Left ventricle myocardium superior (tissue), 1 donor: ENCODE measurements at regions of chr4 and their contacts with region 1.

Region 1: GRCh38 chr4:185039508-185040273 is 21.4 kb downstream of the HELT start:
- DNase-seq: no peak
- ATAC-seq: peak; percentile 80

Region 2: GRCh38 chr4:184201179-184201578 is 838.5 kb before region 1 on chr4:
- intact Hi-C with region 1: no loop called
- DNase-seq: no peak
- ATAC-seq: no peak

Region 3: DNA sequence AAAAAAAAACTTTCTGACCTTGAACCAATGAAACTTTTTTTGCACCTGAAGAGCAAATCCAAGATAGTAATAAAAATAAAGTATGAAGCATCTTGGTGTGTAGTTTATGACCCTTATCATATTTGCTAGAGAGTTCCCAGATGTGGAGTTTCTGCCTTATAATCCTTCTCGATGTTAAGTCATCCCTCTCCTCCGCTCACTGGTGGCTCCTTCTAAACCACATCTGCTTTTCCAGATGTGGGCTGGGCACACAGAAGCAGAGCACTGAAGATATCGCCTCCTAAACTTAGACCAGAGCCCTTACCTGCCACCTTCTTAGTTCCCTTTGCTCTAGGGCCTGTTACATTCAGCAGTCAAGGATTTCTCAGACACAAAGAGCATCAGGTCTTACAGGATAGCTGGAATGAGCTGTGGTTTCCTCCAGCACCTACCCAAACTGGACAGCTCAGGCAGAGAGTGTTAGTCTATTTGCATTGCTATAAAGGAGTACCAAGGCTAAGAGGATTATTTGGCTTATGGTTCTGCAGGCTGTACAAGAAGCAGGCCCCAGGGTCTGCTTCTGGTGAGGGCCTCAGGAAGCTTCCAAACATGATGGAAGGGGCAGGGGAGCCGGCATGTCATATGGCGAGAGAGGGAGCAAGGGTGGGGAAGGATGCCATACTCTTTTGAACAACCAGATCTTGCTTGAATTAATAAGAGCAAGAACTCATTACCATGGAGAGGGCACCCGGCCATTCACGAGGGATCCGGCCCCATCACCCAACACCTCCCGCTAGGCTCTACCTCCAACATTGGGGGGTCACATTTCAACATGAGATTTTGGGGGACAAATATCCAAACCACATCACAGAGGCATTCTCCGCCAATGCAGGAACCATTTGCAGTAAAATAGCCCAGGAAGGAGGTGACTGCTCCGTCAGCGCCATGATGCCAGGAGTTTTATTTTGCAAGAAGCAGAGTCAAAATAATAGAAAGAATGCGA is 97.0 kb before region 1 on chr4:
- intact Hi-C with region 1: no loop called
- DNase-seq: no peak
- ATAC-seq: no peak

Region 4: DNA sequence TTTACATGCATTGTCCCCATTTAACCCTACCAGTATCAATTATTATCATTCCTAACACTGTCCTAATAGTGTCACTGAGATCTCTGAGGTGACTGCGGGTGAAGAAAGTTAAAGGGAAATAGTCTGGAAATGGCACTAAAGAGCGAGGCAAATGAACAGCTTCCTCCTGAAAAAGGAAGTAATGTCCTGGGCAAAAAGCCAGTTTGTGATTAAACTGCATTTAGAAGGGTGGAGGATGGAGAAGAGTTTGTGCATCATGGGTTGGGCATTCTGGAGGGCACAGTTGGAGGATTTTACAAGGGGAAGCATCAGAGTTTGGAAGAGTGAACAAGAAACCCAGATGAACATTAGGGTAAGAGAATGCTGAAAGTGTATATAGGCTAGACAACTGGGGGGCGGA is 42.9 kb after region 1 on chr4:
- intact Hi-C with region 1: no loop called
- DNase-seq: no peak
- ATAC-seq: no peak

Region 5: GRCh38 chr4:185096032-185096653 is 56.5 kb after region 1 on chr4:
- intact Hi-C with region 1: loop called (anchors 5 kb)
- DNase-seq: no peak
- ATAC-seq: peak; percentile 29

Region 6: DNA sequence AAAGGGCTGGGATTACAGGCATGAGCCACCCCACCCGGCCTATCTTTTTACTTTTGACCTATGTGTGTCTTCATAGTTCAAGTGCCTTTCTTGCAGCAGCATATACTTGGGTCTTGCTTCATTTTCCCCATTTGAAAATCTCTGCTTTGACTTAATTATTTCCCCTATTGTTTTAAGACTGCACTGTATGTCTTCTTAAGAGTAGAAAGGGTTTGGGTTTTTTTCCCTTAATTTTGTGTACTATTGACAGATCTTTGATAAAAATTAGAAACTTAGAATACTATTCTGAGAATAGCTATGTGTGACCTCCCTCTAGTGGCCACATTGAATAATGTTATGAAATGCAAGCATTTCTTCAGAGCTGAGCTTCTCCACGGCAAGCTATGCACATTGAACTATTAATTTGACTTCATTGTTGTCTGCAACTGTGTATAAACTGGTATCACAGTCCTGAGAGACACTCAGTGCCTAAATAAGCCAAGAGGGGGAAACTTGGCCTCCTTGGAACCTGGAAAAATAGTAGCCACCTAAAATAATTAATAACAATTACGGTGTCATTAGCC is 94.7 kb after region 1 on chr4:
- intact Hi-C with region 1: loop called (anchors 2 kb)
- DNase-seq: no peak
- ATAC-seq: peak; percentile 35